Calu3 (cell line): ENCODE measurements at regions of chr6 and their contacts with region 1.

Region 1: GRCh38 chr6:111515259-111515658 is 32.2 kb upstream of the REV3L start:
- DNase-seq: no peak
- H3K4me3 Mint-ChIP-seq: no peak overlapping the region
- H3K27ac Mint-ChIP-seq: no peak overlapping the region
- H3K4me1 Mint-ChIP-seq: no peaks in the 10 kb centered on the region
- H3K27me3 Mint-ChIP-seq: no peaks in the 10 kb centered on the region
- CTCF ChIP-seq: no peak

Region 2: DNA sequence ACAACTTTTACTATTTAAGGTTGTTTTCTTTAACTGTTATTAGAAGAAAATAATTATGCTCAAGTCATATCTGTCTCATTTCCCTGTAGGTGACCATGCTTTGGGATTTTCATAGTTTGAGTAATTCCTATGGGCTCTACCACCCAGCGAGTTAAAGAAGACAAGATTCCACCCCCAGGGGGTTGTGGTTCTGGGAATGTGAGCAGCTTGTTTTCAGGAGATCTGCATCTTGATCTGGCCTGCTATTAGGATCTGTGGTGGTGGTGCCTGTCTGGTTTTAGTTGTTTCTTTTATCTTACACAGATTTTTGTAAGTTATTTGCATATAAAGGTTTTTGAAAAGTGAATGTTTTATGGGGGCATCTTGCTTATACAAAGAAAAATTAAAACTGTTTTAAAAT is 12.1 kb before region 1 on chr6:
- CTCF ChIA-PET with region 1: no interaction called
- intact Hi-C with region 1: loop called (anchors 1 kb)
- DNase-seq: no peak
- H3K4me3 Mint-ChIP-seq: no peak overlapping the region
- H3K27ac Mint-ChIP-seq: no peak overlapping the region
- H3K4me1 Mint-ChIP-seq: no peaks in the 10 kb centered on the region
- H3K27me3 Mint-ChIP-seq: no peaks in the 10 kb centered on the region
- CTCF ChIP-seq: no peak

Region 3: DNA sequence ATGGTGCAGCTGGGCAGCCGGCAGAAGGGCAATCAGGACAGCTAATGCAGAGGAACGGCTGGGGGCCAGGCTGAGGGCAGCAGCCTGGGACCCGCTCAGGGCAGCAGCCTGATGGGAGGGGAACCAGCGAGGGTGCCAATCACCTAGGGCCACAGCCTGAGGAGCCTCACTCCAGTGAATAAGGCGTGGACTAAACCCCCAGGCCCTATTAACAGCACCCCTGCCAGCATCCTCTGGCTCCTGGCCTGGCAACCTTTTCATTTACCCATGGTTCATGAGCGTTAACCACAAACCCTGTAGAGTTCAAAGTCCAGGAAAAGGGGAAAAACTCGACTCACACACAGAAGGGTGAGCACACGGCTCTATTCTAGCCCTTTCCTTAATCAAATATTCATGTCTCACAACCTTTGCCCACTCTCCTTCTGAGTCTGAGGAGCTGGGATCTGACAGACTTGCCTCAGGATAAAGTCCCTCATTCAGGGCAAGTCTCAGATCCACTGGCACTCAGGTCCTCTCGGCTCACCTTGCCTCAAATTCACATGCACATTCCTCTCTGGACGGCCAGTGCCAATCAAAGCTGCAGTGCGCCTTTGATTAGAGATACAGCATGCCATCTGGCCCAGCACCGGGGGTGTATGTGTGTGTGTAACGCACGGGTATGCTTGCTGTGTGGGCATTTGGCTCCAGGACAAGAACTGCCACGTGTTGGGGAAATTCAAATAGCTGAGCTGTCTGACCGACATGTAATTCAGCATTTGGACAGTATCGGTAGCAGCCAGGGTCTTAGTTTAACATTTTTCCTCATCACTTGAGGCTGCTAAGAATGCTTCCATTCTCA is 177.3 kb after region 1 on chr6:
- CTCF ChIA-PET with region 1: no interaction called
- intact Hi-C with region 1: no loop called
- DNase-seq: peak; percentile 49
- H3K4me3 Mint-ChIP-seq: peak overlapping the region; percentile 58
- H3K27ac Mint-ChIP-seq: peak overlapping the region; percentile 49
- H3K4me1 Mint-ChIP-seq: peaks cover 26% of the 10 kb centered on the region
- H3K27me3 Mint-ChIP-seq: no peaks in the 10 kb centered on the region
- CTCF ChIP-seq: no peak